Heart right ventricle (tissue), 16 donors: ENCODE measurements at regions of chr19 and their contacts with region 1.

Region 1: GRCh38 chr19:33795370-33796163 is 1.1 kb upstream of the KCTD15 start:
- DNase-seq: peak; percentile 88 to 91
- ATAC-seq: peak; percentile 81 to 91 (median 86)
- H3K4me3 ChIP-seq: peak overlapping the region; percentile 80 to 93 (median 84)
- H3K27ac ChIP-seq: peak overlapping the region; percentile 90 to 100 (median 98)
- H3K4me1 ChIP-seq: peaks cover 0 to 38% (median 15%) of the 10 kb centered on the region in 9 donors
- H3K27me3 ChIP-seq: peaks cover 0 to 28% (median 8%) of the 10 kb centered on the region in 7 donors
- CTCF ChIP-seq: peak; percentile 67 to 95 (median 81)

Region 2: DNA sequence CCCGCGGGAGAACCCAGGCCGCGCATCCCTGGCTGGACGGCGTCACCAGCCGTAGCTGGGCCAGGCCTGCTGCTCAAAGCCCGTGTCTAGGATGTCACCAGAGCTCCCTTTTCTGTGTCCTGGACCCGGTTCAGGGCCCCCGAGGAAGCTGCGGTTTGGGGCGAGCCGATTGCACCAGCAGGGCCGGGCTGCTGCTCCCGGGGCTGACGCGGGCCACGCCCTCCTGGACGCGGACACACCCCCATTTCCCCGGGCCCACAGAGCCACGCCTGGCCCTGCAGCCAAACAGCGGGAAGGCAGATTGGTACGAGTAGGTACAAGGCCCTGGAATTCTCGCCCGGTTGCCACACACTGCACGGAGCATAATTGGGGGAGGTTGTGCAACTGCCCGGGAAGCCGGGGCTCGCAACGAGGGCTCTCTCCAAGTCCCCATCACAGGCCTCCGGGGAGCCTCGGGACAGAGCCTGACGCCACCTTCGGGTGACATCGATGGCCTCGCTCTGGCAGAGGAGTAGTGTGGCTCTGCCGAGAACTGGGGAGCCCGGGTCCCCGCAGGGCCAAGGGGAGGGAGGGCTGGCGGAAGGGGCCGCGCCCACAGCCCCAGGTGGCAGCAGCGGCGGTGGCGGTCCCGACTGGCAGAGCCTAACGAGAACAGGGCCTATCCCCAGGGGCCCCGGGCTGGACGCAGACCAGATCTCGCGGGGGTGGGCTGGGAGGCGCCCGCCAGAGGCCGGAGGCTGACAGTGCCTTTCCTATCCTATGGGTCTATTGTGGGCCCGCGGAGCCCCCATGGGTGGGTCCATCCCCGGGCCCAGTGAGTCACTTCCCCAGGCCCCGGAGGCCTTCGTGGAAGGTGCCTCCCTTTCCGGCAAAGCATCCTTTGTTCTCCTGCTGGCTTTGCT is 24.6 kb after region 1 on chr19:
- intact Hi-C with region 1: loop called in 5 of 10 experiments (anchors 1 to 2 kb)
- DNase-seq: peak; percentile 84 to 86
- ATAC-seq: peak; percentile 87 to 96 (median 90)
- H3K4me3 ChIP-seq: peak overlapping the region; percentile 11 to 72 (median 50)
- H3K27ac ChIP-seq: peak overlapping the region; percentile 71 to 94 (median 86)
- H3K4me1 ChIP-seq: peaks cover 5 to 62% (median 28%) of the 10 kb centered on the region in 9 donors
- H3K27me3 ChIP-seq: peaks cover 0 to 7% (median 0%) of the 10 kb centered on the region in 7 donors
- CTCF ChIP-seq: peak in 3 of 9 donors; percentile 8 to 32 (median 17)

Region 3: DNA sequence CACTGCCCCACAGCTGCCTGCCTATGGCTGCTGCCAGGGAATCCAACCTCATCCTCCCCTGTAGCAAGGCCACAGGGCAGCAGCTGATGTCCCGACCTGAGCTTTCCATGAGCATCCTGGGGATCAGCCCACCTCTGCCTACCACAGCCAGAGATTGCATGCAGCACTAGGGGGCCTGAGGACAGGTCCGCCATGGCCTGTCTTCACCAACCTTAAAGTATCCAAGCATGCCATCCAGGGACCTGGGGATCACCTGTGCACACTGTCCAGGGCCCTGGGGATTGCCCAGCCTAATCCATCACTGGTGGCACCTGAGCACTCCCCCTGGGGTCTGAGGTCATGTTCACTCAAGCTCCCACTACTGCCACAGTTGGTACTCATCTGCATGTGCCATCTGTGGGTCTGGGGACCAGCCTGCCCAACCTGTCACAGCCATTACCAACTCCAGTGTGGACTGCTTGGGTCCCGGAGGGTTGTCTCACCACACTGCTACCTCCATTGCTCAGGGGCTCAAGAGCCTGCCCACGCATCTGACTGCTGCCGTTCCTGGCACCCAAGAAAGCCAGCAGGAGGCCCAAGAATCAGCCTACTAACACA is 54.1 kb after region 1 on chr19:
- intact Hi-C with region 1: no loop called
- DNase-seq: no peak
- ATAC-seq: no peak
- H3K4me3 ChIP-seq: no peak overlapping the region
- H3K27ac ChIP-seq: no peak overlapping the region
- H3K4me1 ChIP-seq: no peaks in the 10 kb centered on the region
- H3K27me3 ChIP-seq: no peaks in the 10 kb centered on the region
- CTCF ChIP-seq: no peak

Region 4: GRCh38 chr19:33868788-33869412 is 73.3 kb after region 1 on chr19:
- intact Hi-C with region 1: loop called in 2 of 10 experiments (anchors 5 kb)
- DNase-seq: peak; percentile 41 to 50
- ATAC-seq: peak; percentile 78 to 96 (median 91)
- H3K4me3 ChIP-seq: peak overlapping the region in 6 of 10 donors; percentile 6 to 36 (median 22)
- H3K27ac ChIP-seq: peak overlapping the region in 4 of 10 donors; percentile 10 to 62 (median 24)
- H3K4me1 ChIP-seq: peaks cover 2 to 20% (median 10%) of the 10 kb centered on the region in 9 donors
- H3K27me3 ChIP-seq: no peaks in the 10 kb centered on the region
- CTCF ChIP-seq: peak in 5 of 9 donors; percentile 6 to 54 (median 37)

Region 5: GRCh38 chr19:33883859-33884519 is 88.4 kb after region 1 on chr19:
- intact Hi-C with region 1: loop called in 2 of 10 experiments (anchors 5 kb)
- DNase-seq: peak; percentile 21 to 62
- ATAC-seq: peak; percentile 69 to 93 (median 78)
- H3K4me3 ChIP-seq: peak overlapping the region in 5 of 10 donors; percentile 11 to 25 (median 17)
- H3K27ac ChIP-seq: peak overlapping the region in 9 of 10 donors; percentile 58 to 86 (median 81)
- H3K4me1 ChIP-seq: peaks cover 5 to 40% (median 31%) of the 10 kb centered on the region in 9 donors
- H3K27me3 ChIP-seq: peaks cover 0 to 13% (median 0%) of the 10 kb centered on the region in 7 donors
- CTCF ChIP-seq: no peak

Region 6: GRCh38 chr19:33905937-33906576 is 110.5 kb after region 1 on chr19:
- intact Hi-C with region 1: loop called in 6 of 10 experiments (anchors 1 to 10 kb)
- DNase-seq: peak; percentile 80
- ATAC-seq: peak; percentile 89 to 94 (median 92)
- H3K4me3 ChIP-seq: peak overlapping the region; percentile 43 to 70 (median 53)
- H3K27ac ChIP-seq: peak overlapping the region; percentile 72 to 98 (median 90)
- H3K4me1 ChIP-seq: peaks cover 4 to 36% (median 26%) of the 10 kb centered on the region in 9 donors
- H3K27me3 ChIP-seq: peaks cover 0 to 61% (median 25%) of the 10 kb centered on the region in 7 donors
- CTCF ChIP-seq: no peak

Region 7: GRCh38 chr19:33998739-33999345 is 203.3 kb after region 1 on chr19:
- intact Hi-C with region 1: loop called in 6 of 10 experiments (anchors 2 to 5 kb)
- DNase-seq: no peak
- ATAC-seq: no peak
- H3K4me3 ChIP-seq: no peak overlapping the region
- H3K27ac ChIP-seq: no peak overlapping the region
- H3K4me1 ChIP-seq: peaks cover 0 to 4% (median 0%) of the 10 kb centered on the region in 9 donors
- H3K27me3 ChIP-seq: peaks cover 0 to 19% (median 4%) of the 10 kb centered on the region in 7 donors
- CTCF ChIP-seq: peak; percentile 21 to 70 (median 55)